Aorta (tissue), 5 donors: ENCODE measurements at regions of chr17 and their contacts with region 1.

Region 1: GRCh38 chr17:48351831-48352332 is 78.1 kb downstream of the SKAP1 start:
- DNase-seq: no peak
- ATAC-seq: peak; percentile 46
- H3K4me3 ChIP-seq: no peak overlapping the region
- H3K27ac ChIP-seq: no peak overlapping the region
- H3K4me1 ChIP-seq: no peaks in the 10 kb centered on the region
- H3K27me3 ChIP-seq: no peaks in the 10 kb centered on the region

Region 2: GRCh38 chr17:48457080-48457836 is 105.4 kb after region 1 on chr17:
- intact Hi-C with region 1: loop called (anchors 5 kb)
- DNase-seq: peak; percentile 65 to 84
- ATAC-seq: peak; percentile 84
- H3K4me3 ChIP-seq: no peak overlapping the region
- H3K27ac ChIP-seq: no peak overlapping the region
- H3K4me1 ChIP-seq: no peaks in the 10 kb centered on the region
- H3K27me3 ChIP-seq: peaks cover 0 to 3% of the 10 kb centered on the region in 2 donors

Region 3: GRCh38 chr17:48593840-48594537 is 242.1 kb after region 1 on chr17:
- intact Hi-C with region 1: loop called (anchors 5 kb)
- DNase-seq: peak; percentile 88 to 95
- ATAC-seq: peak; percentile 88
- H3K4me3 ChIP-seq: no peak overlapping the region
- H3K27ac ChIP-seq: no peak overlapping the region
- H3K4me1 ChIP-seq: no peaks in the 10 kb centered on the region
- H3K27me3 ChIP-seq: no peaks in the 10 kb centered on the region

Region 4: GRCh38 chr17:48618256-48618897 is 266.5 kb after region 1 on chr17:
- intact Hi-C with region 1: loop called in 1 of 2 experiments (anchors 5 kb)
- DNase-seq: peak; percentile 90 to 96
- ATAC-seq: peak; percentile 92
- H3K4me3 ChIP-seq: no peak overlapping the region
- H3K27ac ChIP-seq: no peak overlapping the region
- H3K4me1 ChIP-seq: no peaks in the 10 kb centered on the region
- H3K27me3 ChIP-seq: no peaks in the 10 kb centered on the region